ENCODE measurements at regions of chr9 and their contacts with region 1.

Region 1: GRCh38 chr9:78035383-78035993 is 3.9 kb upstream of the GNAQ start:
- DNase-seq: peak; percentile 76
- ATAC-seq: no peak
- H3K4me3 Mint-ChIP-seq: no peak overlapping the region
- H3K27ac Mint-ChIP-seq: no peak overlapping the region
- H3K4me1 Mint-ChIP-seq: peaks cover 32% of the 10 kb centered on the region
- H3K27me3 Mint-ChIP-seq: peaks cover 6% of the 10 kb centered on the region

Region 2: GRCh38 chr9:77841739-77842386 is 193.6 kb before region 1 on chr9:
- CTCF ChIA-PET with region 1: interaction called, 31 read pairs
- POLR2A ChIA-PET with region 1: no interaction called
- DNase-seq: no peak
- ATAC-seq: no peak
- H3K4me3 Mint-ChIP-seq: no peak overlapping the region
- H3K27ac Mint-ChIP-seq: no peak overlapping the region
- H3K4me1 Mint-ChIP-seq: peaks cover 19% of the 10 kb centered on the region
- H3K27me3 Mint-ChIP-seq: no peaks in the 10 kb centered on the region

Region 3: DNA sequence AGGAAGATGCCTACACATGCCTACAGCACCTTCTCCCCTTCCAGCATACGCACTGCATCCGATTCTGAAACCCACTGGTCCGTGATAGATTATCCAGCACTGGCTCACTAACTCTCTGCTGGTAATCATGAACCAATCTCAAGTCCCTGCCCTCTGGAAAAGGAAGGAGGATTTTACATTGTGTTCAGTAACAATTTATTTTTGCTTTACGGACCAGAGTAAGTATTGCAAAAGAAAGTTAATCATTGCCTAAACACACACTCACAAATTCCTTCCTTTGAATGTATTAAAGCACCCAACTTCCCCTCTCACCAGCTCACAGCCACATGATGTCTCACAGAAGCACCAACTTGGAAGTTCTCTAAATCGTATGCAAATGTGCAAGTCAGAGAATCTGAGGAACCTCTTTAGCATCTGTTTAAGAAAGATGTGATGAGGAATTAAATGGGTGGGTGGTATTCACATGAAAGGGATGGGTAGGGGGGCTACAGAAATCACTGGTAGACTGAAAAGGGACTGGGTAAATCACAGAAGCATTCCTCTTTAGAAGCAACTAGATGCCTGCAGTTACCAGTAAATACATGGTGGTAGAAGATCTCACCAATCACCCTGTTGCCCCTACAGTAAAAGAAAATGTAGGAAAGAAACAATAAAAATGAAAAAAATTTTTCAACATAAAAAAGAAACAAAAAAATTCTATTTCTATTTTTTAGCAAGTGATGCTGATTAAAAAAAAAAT is 12.3 kb before region 1 on chr9:
- CTCF ChIA-PET with region 1: interaction called, 19 read pairs
- POLR2A ChIA-PET with region 1: no interaction called
- DNase-seq: no peak
- ATAC-seq: no peak
- H3K4me3 Mint-ChIP-seq: no peak overlapping the region
- H3K27ac Mint-ChIP-seq: no peak overlapping the region
- H3K4me1 Mint-ChIP-seq: peaks cover 29% of the 10 kb centered on the region
- H3K27me3 Mint-ChIP-seq: no peaks in the 10 kb centered on the region

Region 4: DNA sequence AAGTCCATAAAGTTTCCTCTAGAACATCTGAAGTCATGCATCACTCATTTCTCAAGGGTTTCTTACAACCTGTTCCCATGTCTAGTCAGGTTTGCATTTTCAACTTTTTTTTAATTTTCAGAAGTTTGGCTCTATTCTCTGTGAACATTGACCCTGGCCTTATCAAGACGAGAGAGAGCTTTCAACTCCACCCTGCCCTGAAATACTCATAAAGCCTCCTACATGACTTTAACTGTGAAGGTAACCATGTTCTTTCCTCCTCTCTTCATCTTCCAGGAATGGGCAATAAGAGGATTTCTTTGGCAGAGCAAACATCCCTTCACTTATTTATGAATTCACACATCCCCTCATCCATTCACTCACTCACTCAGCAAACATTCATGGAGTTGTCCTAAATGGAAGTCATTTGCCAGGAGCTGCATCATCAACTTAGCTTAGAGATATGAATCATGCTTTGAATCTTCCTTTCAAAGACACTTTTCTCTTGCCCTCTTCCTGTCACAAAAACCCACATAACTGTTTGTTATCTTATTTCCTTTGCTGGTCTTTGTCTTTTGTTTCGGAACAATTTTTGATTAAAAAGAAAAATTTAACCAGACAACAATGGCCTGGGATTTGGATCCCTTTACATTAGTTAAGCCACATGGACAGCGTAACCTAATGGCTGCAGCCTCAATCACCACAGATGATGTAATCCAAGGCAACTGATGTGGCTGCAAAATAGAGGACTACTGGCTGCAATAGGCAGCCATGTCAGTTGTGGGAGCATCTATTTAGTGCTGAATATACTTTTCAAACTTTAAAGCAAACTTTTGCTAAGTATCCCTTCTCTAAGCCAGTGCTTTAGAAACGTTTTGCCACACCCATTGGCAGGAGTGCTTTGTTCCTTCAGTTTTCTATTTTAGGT is 39.1 kb after region 1 on chr9:
- CTCF ChIA-PET with region 1: interaction called, 22 read pairs
- POLR2A ChIA-PET with region 1: no interaction called
- DNase-seq: peak; percentile 57
- ATAC-seq: peak; percentile 84
- H3K4me3 Mint-ChIP-seq: peak overlapping the region; percentile 63
- H3K27ac Mint-ChIP-seq: peak overlapping the region; percentile 97
- H3K4me1 Mint-ChIP-seq: peaks cover 48% of the 10 kb centered on the region
- H3K27me3 Mint-ChIP-seq: peaks cover 2% of the 10 kb centered on the region

Region 5: GRCh38 chr9:78115073-78115472 is 79.6 kb after region 1 on chr9:
- CTCF ChIA-PET with region 1: interaction called, 32 read pairs
- POLR2A ChIA-PET with region 1: no interaction called
- DNase-seq: peak; percentile 34
- ATAC-seq: no peak
- H3K4me3 Mint-ChIP-seq: no peak overlapping the region
- H3K27ac Mint-ChIP-seq: no peak overlapping the region
- H3K4me1 Mint-ChIP-seq: peaks cover 22% of the 10 kb centered on the region
- H3K27me3 Mint-ChIP-seq: no peaks in the 10 kb centered on the region

Region 6: GRCh38 chr9:78213712-78214111 is 178.2 kb after region 1 on chr9:
- CTCF ChIA-PET with region 1: interaction called, 19 read pairs
- POLR2A ChIA-PET with region 1: no interaction called
- DNase-seq: no peak
- ATAC-seq: peak; percentile 37
- H3K4me3 Mint-ChIP-seq: no peak overlapping the region
- H3K27ac Mint-ChIP-seq: no peak overlapping the region
- H3K4me1 Mint-ChIP-seq: peaks cover 38% of the 10 kb centered on the region
- H3K27me3 Mint-ChIP-seq: no peaks in the 10 kb centered on the region